Activated CD8-positive, alpha-beta T cell treated with anti-CD3 and anti-CD28 coated beads for 36 hours (primary cell): ENCODE measurements at regions of chr1 and their contacts with region 1.

Region 1: GRCh38 chr1:235971571-235972310 is 93.1 kb downstream of the NID1 start:
- DNase-seq: peak; percentile 95
- ATAC-seq: peak; percentile 99
- H3K4me3 Mint-ChIP-seq: peak overlapping the region; percentile 70
- H3K27ac Mint-ChIP-seq: peak overlapping the region; percentile 94
- H3K4me1 Mint-ChIP-seq: peaks cover 16% of the 10 kb centered on the region
- H3K27me3 Mint-ChIP-seq: no peaks in the 10 kb centered on the region
- CTCF ChIP-seq: peak; percentile 83

Region 2: DNA sequence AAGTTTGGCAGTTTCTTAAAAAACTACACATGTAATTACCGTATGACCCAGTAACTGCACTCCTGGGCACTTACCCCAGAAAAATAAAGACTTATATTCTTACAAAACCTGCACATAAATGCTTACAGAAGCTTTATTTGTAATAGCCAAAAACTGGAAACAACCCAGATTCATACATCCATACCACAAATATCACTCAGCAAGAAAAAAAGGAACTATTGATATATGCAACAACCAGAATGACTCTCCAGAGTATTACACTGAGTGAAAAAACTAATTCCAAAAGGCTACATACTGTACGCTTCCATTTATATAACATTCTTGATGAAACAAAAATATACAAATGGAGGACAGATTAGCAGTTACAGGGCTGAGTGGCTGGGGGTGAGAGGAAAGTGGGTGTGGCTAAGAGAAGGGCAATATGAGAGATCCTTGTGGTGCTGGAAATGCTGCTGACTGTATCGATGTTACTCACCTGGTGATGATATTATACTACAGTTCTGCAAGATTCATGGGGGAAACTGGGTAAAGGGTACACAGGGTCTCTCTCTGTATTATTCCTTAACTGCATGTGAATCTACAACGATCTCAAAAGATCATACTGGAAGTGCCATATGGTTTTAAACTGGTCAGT is 226.1 kb before region 1 on chr1:
- CTCF ChIA-PET with region 1: interaction called, 11 read pairs
- POLR2A ChIA-PET with region 1: no interaction called
- intact Hi-C with region 1: no loop called
- DNase-seq: peak; percentile 2
- ATAC-seq: no peak
- H3K4me3 Mint-ChIP-seq: no peak overlapping the region
- H3K27ac Mint-ChIP-seq: no peak overlapping the region
- H3K4me1 Mint-ChIP-seq: no peaks in the 10 kb centered on the region
- H3K27me3 Mint-ChIP-seq: no peaks in the 10 kb centered on the region
- CTCF ChIP-seq: no peak

Region 3: GRCh38 chr1:235831148-235831547 is 140.6 kb before region 1 on chr1:
- CTCF ChIA-PET with region 1: interaction called, 20 read pairs
- POLR2A ChIA-PET with region 1: no interaction called
- intact Hi-C with region 1: no loop called
- DNase-seq: peak; percentile 77
- ATAC-seq: peak; percentile 100
- H3K4me3 Mint-ChIP-seq: no peak overlapping the region
- H3K27ac Mint-ChIP-seq: peak overlapping the region; percentile 77
- H3K4me1 Mint-ChIP-seq: peaks cover 22% of the 10 kb centered on the region
- H3K27me3 Mint-ChIP-seq: no peaks in the 10 kb centered on the region
- CTCF ChIP-seq: no peak

Region 4: DNA sequence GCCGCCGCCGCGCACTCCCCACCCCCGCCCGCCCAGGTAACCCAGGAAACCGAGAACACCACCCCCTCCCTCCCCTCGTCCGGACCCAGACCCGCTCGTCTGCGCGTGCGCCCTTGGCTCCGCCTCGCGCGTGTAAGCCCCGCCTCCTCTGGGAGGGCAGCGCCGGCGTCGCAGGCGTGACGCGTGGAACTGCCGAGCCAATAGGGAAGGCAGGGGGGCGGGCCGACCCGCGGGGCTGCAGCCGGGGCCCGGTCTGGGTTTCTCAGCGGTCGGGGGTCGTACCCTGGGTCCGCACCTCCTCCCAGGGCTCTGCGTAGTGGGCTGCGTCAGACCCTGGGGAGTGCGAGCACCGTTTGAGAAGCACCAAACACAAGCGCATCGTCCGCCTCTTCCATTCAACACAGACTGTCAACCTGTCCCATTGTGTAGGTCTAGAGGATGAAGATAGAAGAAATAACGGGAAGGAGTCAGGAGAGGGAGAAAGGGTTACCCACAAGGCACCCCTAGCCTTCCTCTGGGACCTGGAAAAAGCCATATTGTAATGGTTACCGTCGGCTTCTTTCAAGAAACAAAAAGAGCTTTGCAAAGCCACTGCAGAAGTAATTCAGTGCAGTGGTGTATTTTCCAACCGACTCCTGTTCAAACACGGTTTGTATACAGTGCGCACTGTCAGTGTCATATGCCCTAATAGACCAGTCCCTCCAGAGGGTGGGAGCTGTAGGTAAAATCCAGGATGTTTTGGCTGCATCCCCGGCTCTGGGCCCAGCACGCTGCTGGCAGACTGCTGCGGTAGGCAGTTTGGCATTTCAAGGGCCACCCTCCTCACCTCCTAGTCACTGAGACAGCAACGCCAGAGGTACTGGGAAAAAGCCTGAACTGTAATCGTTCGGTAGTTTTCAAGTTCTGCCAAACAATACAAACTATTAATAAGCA is 104.6 kb before region 1 on chr1:
- CTCF ChIA-PET with region 1: interaction called, 91 read pairs
- POLR2A ChIA-PET with region 1: interaction called, 15 read pairs
- intact Hi-C with region 1: loop called (anchors 5 kb)
- DNase-seq: peak; percentile 97
- ATAC-seq: peak; percentile 80
- H3K4me3 Mint-ChIP-seq: peak overlapping the region; percentile 98
- H3K27ac Mint-ChIP-seq: peak overlapping the region; percentile 97
- H3K4me1 Mint-ChIP-seq: peaks cover 39% of the 10 kb centered on the region
- H3K27me3 Mint-ChIP-seq: no peaks in the 10 kb centered on the region
- CTCF ChIP-seq: no peak

Region 5: DNA sequence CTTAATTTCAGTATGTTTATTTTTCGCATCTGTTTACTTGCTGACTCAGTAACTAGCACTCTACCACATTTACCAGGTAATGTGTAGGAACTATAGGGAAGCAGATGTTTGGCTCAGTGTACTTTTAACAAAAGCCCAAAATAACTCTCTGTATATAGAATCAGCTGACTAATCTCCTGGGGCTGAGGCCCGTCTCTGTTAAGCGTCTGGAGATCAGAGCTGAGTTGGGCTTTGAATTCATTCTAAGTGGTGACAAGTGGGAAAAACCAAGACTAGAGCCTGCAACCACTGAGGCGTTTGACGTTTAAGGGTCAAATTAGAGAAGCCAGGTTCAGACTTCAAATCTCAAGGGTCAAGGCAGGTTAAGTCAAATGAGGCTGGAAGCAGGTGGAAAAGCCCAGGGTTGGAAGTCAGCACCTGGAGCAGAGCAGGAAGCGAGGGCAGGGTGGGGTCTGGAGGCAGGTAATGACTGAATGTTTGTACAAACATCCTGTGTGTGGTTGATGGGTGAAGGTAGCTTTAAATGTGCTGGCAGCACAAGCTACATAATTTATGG is 48.2 kb before region 1 on chr1:
- CTCF ChIA-PET with region 1: interaction called, 10 read pairs
- POLR2A ChIA-PET with region 1: no interaction called
- intact Hi-C with region 1: no loop called
- DNase-seq: no peak
- ATAC-seq: peak; percentile 72
- H3K4me3 Mint-ChIP-seq: no peak overlapping the region
- H3K27ac Mint-ChIP-seq: peak overlapping the region; percentile 71
- H3K4me1 Mint-ChIP-seq: peaks cover 42% of the 10 kb centered on the region
- H3K27me3 Mint-ChIP-seq: no peaks in the 10 kb centered on the region
- CTCF ChIP-seq: no peak

Region 6: DNA sequence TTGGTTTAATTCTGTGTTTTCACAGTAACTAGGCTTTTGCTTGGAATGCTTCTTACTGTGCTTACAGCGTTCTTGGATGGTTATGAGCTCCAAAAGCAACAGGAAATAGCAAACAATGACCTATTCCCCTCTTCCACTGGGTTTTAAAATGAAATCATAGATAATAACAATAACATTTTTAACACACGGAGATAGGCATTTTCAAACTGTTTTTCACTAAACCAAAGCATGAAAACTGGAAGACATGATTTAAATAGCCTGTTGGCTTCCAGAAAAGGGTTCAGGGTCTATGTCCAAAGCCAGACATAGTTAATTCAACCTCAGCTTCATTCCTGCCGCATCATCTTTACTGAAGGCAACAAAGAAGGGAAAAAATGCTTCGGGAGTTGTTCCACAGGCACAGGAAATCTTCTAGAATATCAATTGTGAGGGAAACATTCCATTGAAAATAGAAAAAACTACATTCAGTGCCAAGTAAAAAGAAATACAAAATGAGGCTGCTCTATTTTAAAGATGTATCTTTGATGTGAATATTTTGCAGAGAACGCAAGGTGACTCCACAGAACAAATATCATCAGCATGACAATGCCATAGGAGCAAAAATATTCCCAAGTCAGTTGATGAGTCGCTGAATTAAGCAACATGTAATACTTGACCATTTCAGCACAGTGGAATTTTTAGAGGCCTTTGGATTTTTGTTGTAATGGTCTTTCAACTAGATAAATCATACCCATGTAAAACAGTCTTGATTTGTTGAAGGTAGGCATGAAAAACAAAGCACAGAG is 12.5 kb after region 1 on chr1:
- CTCF ChIA-PET with region 1: interaction called, 24 read pairs
- POLR2A ChIA-PET with region 1: interaction called, 7 read pairs
- intact Hi-C with region 1: no loop called
- DNase-seq: no peak
- ATAC-seq: no peak
- H3K4me3 Mint-ChIP-seq: no peak overlapping the region
- H3K27ac Mint-ChIP-seq: no peak overlapping the region
- H3K4me1 Mint-ChIP-seq: no peaks in the 10 kb centered on the region
- H3K27me3 Mint-ChIP-seq: peaks cover 3% of the 10 kb centered on the region
- CTCF ChIP-seq: no peak

Region 7: GRCh38 chr1:236059011-236059410 is 87.3 kb after region 1 on chr1:
- CTCF ChIA-PET with region 1: no interaction called
- POLR2A ChIA-PET with region 1: no interaction called
- intact Hi-C with region 1: no loop called
- DNase-seq: no peak
- ATAC-seq: no peak
- H3K4me3 Mint-ChIP-seq: no peak overlapping the region
- H3K27ac Mint-ChIP-seq: no peak overlapping the region
- H3K4me1 Mint-ChIP-seq: peaks cover 8% of the 10 kb centered on the region
- H3K27me3 Mint-ChIP-seq: peaks cover 14% of the 10 kb centered on the region
- CTCF ChIP-seq: no peak